ENCODE measurements at regions of chr11 and their contacts with region 1.

Region 1: DNA sequence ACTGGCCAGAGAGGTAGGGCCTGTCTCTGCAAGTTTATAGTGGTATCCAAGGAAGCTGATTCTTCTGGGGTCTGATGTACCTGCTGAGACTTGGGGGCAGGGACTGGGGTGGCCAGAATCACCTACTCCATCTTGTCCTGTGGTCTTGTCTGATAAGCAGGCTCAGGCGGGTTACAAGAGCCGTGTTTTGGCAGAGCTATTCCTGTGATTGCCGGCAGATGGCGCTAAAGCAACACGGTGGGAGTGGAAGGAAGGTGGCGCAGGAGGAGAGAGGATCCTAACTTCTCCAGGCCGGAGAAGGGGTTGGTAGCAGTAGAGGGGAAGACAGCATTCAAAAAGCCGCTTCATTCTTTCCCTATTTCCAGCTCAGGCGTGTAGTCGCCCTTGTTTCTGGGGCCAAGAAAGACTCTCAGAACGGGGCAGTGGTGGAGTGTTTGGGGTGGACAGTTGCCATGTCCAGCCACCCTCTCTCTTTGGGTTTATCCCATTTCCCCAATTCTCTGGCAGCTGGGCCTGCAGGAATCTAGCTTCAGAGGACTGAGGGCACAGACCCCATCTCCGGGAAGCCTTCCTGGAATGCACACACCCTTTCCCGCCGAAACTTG is 15.1 kb downstream of the CHRM1 start:
- DNase-seq: peak; percentile 73
- H3K4me3 ChIP-seq: no peak overlapping the region
- H3K27ac ChIP-seq: no peak overlapping the region
- H3K4me1 ChIP-seq: no peaks in the 10 kb centered on the region
- CTCF ChIP-seq: peak; percentile 98

Region 2: DNA sequence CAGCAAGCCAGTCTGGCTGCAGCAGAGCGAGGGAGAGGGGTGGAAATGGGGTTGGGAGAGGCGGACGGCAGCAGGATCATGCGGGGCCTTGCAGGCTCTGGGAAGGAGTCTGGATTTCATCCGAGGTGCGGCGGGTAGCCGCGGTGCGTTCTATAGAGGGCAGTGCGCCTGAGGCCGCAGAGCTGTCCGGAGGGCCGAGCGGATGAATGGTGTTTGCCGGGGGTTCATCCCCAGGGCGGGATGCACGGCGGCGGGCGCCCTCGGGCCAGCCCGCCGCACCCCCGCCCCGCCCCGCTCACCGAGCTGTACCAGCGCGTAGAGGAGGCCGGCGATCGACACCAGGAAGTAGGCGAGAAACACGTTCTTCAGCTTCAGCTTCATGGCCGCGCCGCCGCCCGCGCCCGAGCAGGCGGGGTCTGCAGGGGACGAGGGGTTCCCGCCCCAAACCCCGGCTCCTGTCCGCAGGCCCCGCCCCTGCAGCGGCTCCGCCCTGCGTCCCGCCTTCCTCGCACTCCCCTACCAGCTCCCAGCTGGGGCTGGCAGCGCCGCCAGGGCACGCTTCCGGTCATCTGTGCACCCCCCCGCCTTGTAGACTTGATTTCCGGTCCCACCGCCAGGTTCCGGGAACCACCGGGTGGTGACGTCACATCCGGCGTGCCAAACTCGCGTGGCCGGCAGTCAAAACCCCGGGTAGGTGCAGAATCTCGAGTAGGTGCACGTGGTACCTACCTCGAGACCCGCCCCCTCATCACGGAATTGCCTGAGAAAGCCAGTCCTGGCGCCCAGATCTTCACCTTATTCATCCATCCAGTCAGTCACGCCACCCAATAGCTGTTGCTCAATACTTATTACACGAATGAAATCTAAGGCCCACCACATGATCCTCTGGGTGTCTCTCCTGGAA is 284.2 kb before region 1 on chr11 and contains the start of gene B3GAT3:
- CTCF ChIA-PET with region 1: no interaction called
- POLR2A ChIA-PET with region 1: no interaction called
- intact Hi-C with region 1: no loop called
- DNase-seq: peak; percentile 99
- H3K4me3 ChIP-seq: peak within 1 kb of the TSS; percentile 79
- H3K27ac ChIP-seq: peak within 1 kb of the TSS; percentile 83
- H3K4me1 ChIP-seq: peaks cover 25% of the 10 kb centered on the region
- CTCF ChIP-seq: 0 out of 2 replicates have a peak, but pooled peaks have one; percentile 20
- total RNA-seq, gene B3GAT3: 55.8 and 74.3 TPM in 2 replicates

Region 3: DNA sequence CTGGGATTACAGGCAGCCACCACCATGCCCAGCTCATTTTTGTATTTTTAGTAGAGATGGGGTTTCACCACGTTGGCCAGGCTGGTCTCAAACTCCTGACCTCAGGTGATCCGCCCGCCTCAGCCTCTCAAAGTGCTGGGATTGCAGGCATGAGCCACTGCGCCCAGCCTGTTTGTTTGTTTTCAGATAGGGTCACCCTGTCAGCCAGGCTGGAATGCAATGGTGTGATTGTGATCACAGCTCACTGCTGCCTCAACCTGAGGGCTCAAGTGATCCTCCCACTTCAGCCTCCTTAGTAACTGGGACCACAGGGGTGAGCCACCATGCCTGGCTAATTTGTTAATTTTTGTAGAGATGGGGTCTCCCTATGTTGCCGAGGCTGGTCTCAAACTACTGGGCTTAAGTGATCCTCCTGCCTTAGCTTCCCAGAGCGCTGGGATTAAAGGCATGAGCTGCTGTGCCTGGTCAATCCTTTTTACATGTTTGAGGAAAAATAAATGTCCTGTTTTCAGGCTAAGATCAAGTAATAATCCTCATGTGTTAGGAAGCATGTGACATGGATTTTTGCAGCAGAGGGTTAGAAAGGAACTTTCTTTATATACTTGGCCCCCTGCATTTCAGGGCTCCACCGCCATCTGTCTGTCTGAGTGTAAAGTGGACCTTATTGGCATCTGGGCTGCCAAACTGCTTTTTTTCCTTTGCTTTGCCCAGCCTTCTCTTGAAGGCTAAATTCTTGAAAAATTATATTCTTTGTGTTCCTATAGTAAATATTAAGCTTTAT is 30.1 kb before region 1 on chr11:
- CTCF ChIA-PET with region 1: no interaction called
- POLR2A ChIA-PET with region 1: no interaction called
- intact Hi-C with region 1: no loop called
- DNase-seq: no peak
- H3K4me3 ChIP-seq: no peak overlapping the region
- H3K27ac ChIP-seq: no peak overlapping the region
- H3K4me1 ChIP-seq: peaks cover 13% of the 10 kb centered on the region
- CTCF ChIP-seq: no peak

Region 4: GRCh38 chr11:62974848-62975522 is 69.0 kb after region 1 on chr11:
- CTCF ChIA-PET with region 1: interaction called, 3 read pairs
- POLR2A ChIA-PET with region 1: no interaction called
- intact Hi-C with region 1: loop called (anchors 1 kb)
- DNase-seq: peak; percentile 38
- H3K4me3 ChIP-seq: no peak overlapping the region
- H3K27ac ChIP-seq: no peak overlapping the region
- H3K4me1 ChIP-seq: no peaks in the 10 kb centered on the region
- CTCF ChIP-seq: peak; percentile 70

Region 5: DNA sequence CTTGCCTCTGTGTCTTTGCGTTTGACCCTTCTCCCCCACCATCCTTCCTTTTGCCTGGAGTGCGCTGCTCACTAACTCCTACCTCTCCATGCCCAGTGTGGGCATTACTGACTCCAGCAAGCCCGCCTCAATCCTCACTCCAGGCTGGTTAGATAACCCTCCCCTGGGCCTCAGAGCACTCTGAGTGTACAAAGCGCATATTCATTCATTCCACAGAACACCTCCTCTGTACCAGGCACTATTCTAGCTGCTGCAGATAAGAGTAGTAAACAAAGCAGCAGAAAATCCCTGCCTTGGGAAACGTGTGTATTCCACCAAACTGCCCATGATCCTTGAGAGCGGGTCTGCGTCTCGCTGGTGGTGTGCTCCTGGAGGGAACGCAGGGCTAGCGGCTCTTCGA is 106.4 kb after region 1 on chr11:
- CTCF ChIA-PET with region 1: no interaction called
- POLR2A ChIA-PET with region 1: no interaction called
- intact Hi-C with region 1: no loop called
- DNase-seq: no peak
- H3K4me3 ChIP-seq: no peak overlapping the region
- H3K27ac ChIP-seq: no peak overlapping the region
- H3K4me1 ChIP-seq: no peaks in the 10 kb centered on the region
- CTCF ChIP-seq: no peak

Region 6: GRCh38 chr11:63023841-63024648 is 118.0 kb after region 1 on chr11:
- CTCF ChIA-PET with region 1: interaction called, 9 read pairs
- POLR2A ChIA-PET with region 1: no interaction called
- intact Hi-C with region 1: loop called (anchors 1 kb)
- DNase-seq: peak; percentile 73
- H3K4me3 ChIP-seq: no peak overlapping the region
- H3K27ac ChIP-seq: no peak overlapping the region
- H3K4me1 ChIP-seq: no peaks in the 10 kb centered on the region
- CTCF ChIP-seq: peak; percentile 100

Region 7: GRCh38 chr11:63212742-63213141 is 306.7 kb after region 1 on chr11:
- CTCF ChIA-PET with region 1: no interaction called
- POLR2A ChIA-PET with region 1: no interaction called
- intact Hi-C with region 1: loop called (anchors 1 kb)
- DNase-seq: peak; percentile 22
- H3K4me3 ChIP-seq: no peak overlapping the region
- H3K27ac ChIP-seq: no peak overlapping the region
- H3K4me1 ChIP-seq: no peaks in the 10 kb centered on the region
- CTCF ChIP-seq: peak; percentile 77

Measured in OCI-LY7 (cell line).